CD8-positive, alpha-beta T cell (primary cell): ENCODE measurements at regions of chr7 and their contacts with region 1.

Region 1: GRCh38 chr7:142587578-142588191 is 161.6 kb upstream of the PRSS1 start:
- DNase-seq: peak in 2 of 9 experiments; percentile 55 to 64
- ATAC-seq: peak; percentile 71
- H3K4me3 ChIP-seq: no peak overlapping the region
- H3K4me3 Mint-ChIP-seq: no peak overlapping the region
- H3K27ac ChIP-seq: no peak overlapping the region
- H3K27ac Mint-ChIP-seq: no peak overlapping the region
- H3K4me1 ChIP-seq: no peaks in the 10 kb centered on the region
- H3K4me1 Mint-ChIP-seq: peaks cover 2% of the 10 kb centered on the region
- H3K27me3 ChIP-seq: no peaks in the 10 kb centered on the region
- H3K27me3 Mint-ChIP-seq: no peaks in the 10 kb centered on the region
- CTCF ChIP-seq: no peak

Region 2: GRCh38 chr7:142516038-142516501 is 71.6 kb before region 1 on chr7:
- CTCF ChIA-PET with region 1: no interaction called
- POLR2A ChIA-PET with region 1: no interaction called
- intact Hi-C with region 1: no loop called
- DNase-seq: peak in 4 of 9 experiments; percentile 26 to 75 (median 46)
- ATAC-seq: peak; percentile 68
- H3K4me3 ChIP-seq: no peak overlapping the region
- H3K4me3 Mint-ChIP-seq: no peak overlapping the region
- H3K27ac ChIP-seq: no peak overlapping the region
- H3K27ac Mint-ChIP-seq: no peak overlapping the region
- H3K4me1 ChIP-seq: peaks cover 25% of the 10 kb centered on the region
- H3K4me1 Mint-ChIP-seq: peaks cover 48% of the 10 kb centered on the region
- H3K27me3 ChIP-seq: no peaks in the 10 kb centered on the region
- H3K27me3 Mint-ChIP-seq: no peaks in the 10 kb centered on the region
- CTCF ChIP-seq: peak; percentile 66

Region 3: GRCh38 chr7:142535123-142535779 is 52.4 kb before region 1 on chr7:
- CTCF ChIA-PET with region 1: interaction called, 7 read pairs
- POLR2A ChIA-PET with region 1: no interaction called
- intact Hi-C with region 1: loop called in 1 of 2 experiments (anchors 10 kb)
- DNase-seq: peak; percentile 24 to 82 (median 68)
- ATAC-seq: peak; percentile 77
- H3K4me3 ChIP-seq: peak overlapping the region; percentile 20 to 22
- H3K4me3 Mint-ChIP-seq: peak overlapping the region; percentile 38
- H3K27ac ChIP-seq: peak overlapping the region; percentile 42 to 46
- H3K27ac Mint-ChIP-seq: peak overlapping the region; percentile 73
- H3K4me1 ChIP-seq: peaks cover 24% of the 10 kb centered on the region
- H3K4me1 Mint-ChIP-seq: peaks cover 29% of the 10 kb centered on the region
- H3K27me3 ChIP-seq: no peaks in the 10 kb centered on the region
- H3K27me3 Mint-ChIP-seq: no peaks in the 10 kb centered on the region
- CTCF ChIP-seq: no peak

Region 4: GRCh38 chr7:142685877-142686508 is 98.3 kb after region 1 on chr7:
- CTCF ChIA-PET with region 1: no interaction called
- POLR2A ChIA-PET with region 1: no interaction called
- intact Hi-C with region 1: no loop called
- DNase-seq: peak in 6 of 9 experiments; percentile 1 to 70 (median 27)
- ATAC-seq: peak; percentile 78
- H3K4me3 ChIP-seq: no peak overlapping the region
- H3K4me3 Mint-ChIP-seq: no peak overlapping the region
- H3K27ac ChIP-seq: peak overlapping the region; percentile 27 to 54
- H3K27ac Mint-ChIP-seq: peak overlapping the region; percentile 88
- H3K4me1 ChIP-seq: peaks cover 19% of the 10 kb centered on the region
- H3K4me1 Mint-ChIP-seq: peaks cover 44% of the 10 kb centered on the region
- H3K27me3 ChIP-seq: no peaks in the 10 kb centered on the region
- H3K27me3 Mint-ChIP-seq: no peaks in the 10 kb centered on the region
- CTCF ChIP-seq: no peak